Dorsolateral prefrontal cortex (tissue), 120 donors: ENCODE measurements at regions of chr1 and their contacts with region 1.

Region 1: GRCh38 chr1:94230920-94231319 is 6.5 kb downstream of the ARHGAP29 start:
- DNase-seq: no peak
- H3K4me3 ChIP-seq: peak overlapping the region in 1 of 59 donors; percentile 5
- H3K27ac ChIP-seq: peak overlapping the region in 3 of 59 donors; percentile 5 to 20 (median 11)
- H3K27me3 ChIP-seq: peaks cover 0 to 55% (median 18%) of the 10 kb centered on the region in 45 donors
- CTCF ChIP-seq: no peak

Region 2: DNA sequence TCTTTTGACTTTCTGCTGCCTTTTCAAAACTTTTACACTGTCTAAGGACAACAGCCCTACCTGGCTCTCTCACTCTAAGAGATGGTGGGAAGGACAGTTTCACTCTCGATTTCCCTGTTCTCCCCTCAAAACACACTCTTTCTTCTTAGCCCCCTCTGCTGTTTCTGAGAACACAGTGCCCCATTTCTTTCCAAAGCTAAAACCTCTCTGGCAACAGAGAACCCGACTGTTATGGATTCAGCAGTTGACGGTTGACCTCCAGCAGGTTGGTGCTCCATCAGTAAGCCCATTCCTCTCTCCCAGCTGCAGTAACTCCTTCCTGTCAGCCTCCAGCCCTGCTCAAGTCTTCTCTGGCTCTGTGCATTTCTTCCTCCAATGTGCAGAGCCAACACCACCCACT is 99.1 kb after region 1 on chr1:
- intact Hi-C with region 1: loop called in 1 of 2 experiments (anchors 5 kb)
- DNase-seq: no peak
- H3K4me3 ChIP-seq: peak overlapping the region in 1 of 59 donors; percentile 7
- H3K27ac ChIP-seq: peak overlapping the region in 7 of 59 donors; percentile 4 to 41 (median 25)
- H3K27me3 ChIP-seq: peaks cover 0 to 23% (median 0%) of the 10 kb centered on the region in 45 donors
- CTCF ChIP-seq: peak in 53 of 56 donors; percentile 12 to 57 (median 38)